K562 (cell line): ENCODE measurements at regions of chr22 and their contacts with region 1.

Region 1: DNA sequence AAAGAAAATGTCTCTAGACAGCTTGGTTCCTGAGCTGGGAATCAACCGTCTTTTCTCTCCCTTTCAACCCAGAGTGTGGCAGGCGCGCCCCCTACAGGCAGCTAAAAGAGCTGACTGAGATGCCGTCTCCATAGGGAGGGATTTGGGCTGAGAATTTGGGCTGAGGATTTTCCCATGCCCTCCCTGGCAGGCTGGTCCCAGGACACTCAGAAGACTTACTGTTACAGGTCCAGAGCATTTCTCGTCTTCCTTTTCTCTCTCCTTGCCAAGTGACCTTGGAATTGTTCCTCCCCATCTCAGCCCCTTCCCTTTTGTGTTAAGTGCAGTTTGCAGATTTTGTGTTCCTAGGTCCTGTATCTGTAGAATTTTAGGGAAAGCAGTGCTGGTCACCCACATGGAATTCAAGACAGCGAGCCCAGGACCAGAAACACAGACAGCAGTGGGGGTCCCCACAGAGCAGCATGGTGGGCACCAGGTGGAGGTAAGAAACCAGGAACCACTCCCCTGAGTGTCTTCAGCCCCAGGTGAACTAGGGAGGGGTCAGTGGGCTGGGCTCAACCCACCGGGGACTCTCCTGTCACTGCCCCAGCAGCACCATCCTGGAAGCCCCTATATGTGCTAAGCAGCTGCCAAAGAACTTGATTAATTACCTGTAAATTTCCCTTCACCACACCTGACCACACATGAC is 9.9 kb upstream of the IGLL5 start:
- DNase-seq: peak in 3 of 4 experiments; percentile 58 to 99 (median 98)
- ATAC-seq: peak; percentile 90
- H3K4me3 ChIP-seq: no peak overlapping the region
- H3K27ac ChIP-seq: no peak overlapping the region
- H3K4me1 ChIP-seq: peaks cover 0 to 3% of the 10 kb centered on the region in 2 experiments; a peak in 1 of 5 replicates
- H3K27me3 ChIP-seq: peaks cover 0 to 41% of the 10 kb centered on the region in 2 experiments; a peak in 2 of 5 replicates
- CTCF ChIP-seq: no peak
- EP300 ChIP-seq: no peak
- POLR2A ChIP-seq: no peak
- RAD21 ChIP-seq: no peak

Region 2: GRCh38 chr22:22753526-22754267 is 124.0 kb before region 1 on chr22:
- CTCF ChIA-PET with region 1: interaction called, 23 read pairs
- POLR2A ChIA-PET with region 1: interaction called, 16 read pairs
- in situ Hi-C with region 1: no loop called
- intact Hi-C with region 1: loop called (anchors 1 kb)
- DNase-seq: peak; percentile 96 to 100 (median 100)
- ATAC-seq: peak; percentile 97
- H3K4me3 ChIP-seq: no peak overlapping the region
- H3K27ac ChIP-seq: no peak overlapping the region
- H3K4me1 ChIP-seq: no peaks in the 10 kb centered on the region
- H3K27me3 ChIP-seq: peaks cover 2 to 20% of the 10 kb centered on the region in 2 experiments; a peak in 3 of 5 replicates
- CTCF ChIP-seq: peak in 1 of 3 experiments; percentile 100; a peak in 2 of 6 replicates
- EP300 ChIP-seq: no peak; the same call in 1 of the 2 replicates
- POLR2A ChIP-seq: no peak
- RAD21 ChIP-seq: peak in 1 of 2 experiments; percentile 98; a peak in 2 of 4 replicates

Region 3: DNA sequence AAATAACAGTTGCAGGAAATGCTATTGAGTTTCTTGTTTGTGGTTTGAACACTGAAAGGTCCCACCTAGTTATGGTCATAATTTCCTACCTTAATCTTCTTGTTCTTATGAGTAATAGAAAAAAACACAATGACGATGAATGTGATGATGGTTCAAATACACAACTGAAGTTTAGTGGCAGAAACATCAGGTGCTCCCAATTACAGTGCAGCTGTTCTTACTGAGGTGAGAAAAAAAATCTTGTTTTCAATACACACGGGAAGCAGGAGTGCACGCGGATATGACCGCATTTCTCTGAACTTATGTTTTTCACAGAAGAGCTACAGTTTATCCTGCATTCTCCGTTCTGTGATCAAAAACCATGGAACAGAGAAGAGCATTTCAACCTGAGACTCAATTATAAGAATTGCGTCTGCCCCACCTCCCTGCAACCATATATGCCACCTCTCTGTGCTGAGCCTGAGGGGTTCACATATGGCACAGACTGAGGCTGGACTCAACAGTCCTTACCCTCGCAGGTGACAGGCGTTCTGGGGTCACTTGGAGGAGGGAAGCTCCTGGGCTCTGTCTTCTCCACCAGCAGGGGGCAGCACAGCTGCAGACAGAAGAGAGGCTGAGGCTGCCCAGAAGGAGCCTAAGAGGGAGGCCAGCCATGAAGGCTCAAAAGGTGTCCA is 89.7 kb before region 1 on chr22:
- CTCF ChIA-PET with region 1: interaction called, 69 read pairs
- POLR2A ChIA-PET with region 1: interaction called, 5 read pairs
- in situ Hi-C with region 1: no loop called
- intact Hi-C with region 1: loop called (anchors 1 kb)
- DNase-seq: peak; percentile 97 to 100 (median 99)
- ATAC-seq: peak; percentile 96
- H3K4me3 ChIP-seq: no peak overlapping the region
- H3K27ac ChIP-seq: no peak overlapping the region
- H3K4me1 ChIP-seq: peaks cover 0 to 3% of the 10 kb centered on the region in 2 experiments; a peak in 1 of 5 replicates
- H3K27me3 ChIP-seq: peaks cover 26 to 30% of the 10 kb centered on the region in 2 experiments; a peak in 4 of 5 replicates
- CTCF ChIP-seq: no peak
- EP300 ChIP-seq: no peak
- POLR2A ChIP-seq: no peak
- RAD21 ChIP-seq: no peak

Region 4: DNA sequence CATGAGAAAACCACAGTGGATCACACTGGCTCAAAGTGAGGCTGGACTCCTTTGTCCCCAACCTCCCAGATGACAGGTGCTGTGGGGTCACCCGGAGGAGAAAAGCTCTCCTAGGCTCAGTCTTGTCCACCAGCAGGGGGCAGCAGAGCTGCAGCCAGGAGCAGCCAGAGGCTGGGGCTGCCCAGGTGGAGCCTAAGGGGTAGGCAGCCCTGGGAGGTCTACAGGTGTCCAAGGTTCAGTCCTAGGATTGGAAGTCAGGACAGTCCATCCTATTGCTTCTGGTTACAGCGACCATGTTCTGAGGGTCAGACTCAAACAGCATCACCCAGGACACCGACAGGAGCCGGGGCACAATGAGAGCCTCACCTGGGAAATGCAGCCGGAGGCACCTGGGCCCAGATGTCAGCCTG is 67.6 kb before region 1 on chr22:
- CTCF ChIA-PET with region 1: interaction called, 251 read pairs
- POLR2A ChIA-PET with region 1: interaction called, 9 read pairs
- in situ Hi-C with region 1: loop called (anchors 5 kb)
- intact Hi-C with region 1: loop called (anchors 1 kb)
- DNase-seq: peak; percentile 97 to 100 (median 98)
- ATAC-seq: peak; percentile 96
- H3K4me3 ChIP-seq: no peak overlapping the region
- H3K27ac ChIP-seq: no peak overlapping the region
- H3K4me1 ChIP-seq: peaks cover 0 to 4% of the 10 kb centered on the region in 2 experiments; a peak in 1 of 5 replicates
- H3K27me3 ChIP-seq: peaks cover 8 to 19% of the 10 kb centered on the region in 2 experiments; a peak in 3 of 5 replicates
- CTCF ChIP-seq: no peak
- EP300 ChIP-seq: no peak
- POLR2A ChIP-seq: no peak
- RAD21 ChIP-seq: no peak

Region 5: DNA sequence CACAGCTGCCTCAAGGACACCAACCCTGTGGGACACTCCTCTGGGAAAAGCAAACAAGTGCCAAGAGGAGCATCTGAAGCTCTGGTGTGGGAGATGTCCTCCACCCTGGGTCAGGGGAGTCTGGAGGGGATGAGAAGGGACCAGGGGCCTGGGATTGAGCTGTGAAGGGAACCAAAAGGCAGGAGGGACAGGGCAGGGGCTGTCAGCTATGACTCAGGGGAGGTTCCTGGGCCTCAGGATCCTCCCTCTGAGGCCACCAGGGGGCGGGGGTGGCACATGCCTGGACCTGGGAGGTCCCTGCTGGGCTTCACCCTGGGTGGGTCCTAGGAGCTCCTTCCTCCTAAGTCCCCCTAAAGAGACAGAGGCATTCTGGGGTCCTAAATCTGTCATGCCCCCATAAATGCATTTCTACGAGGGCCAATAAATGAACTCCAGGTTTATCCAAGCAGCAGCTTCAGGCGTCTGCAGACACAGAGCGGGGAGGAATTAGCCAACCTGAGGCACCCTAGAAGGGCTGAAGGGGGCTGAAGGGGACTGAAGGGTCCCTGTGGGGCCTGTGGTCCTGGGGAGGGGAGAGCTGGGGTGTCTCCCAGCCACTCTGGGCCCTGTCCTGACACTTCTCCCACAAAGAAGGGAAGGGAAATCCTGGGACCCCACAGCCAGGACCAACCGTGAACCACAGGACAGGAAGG is 21.9 kb before region 1 on chr22:
- CTCF ChIA-PET with region 1: interaction called, 42 read pairs
- POLR2A ChIA-PET with region 1: interaction called, 17 read pairs
- in situ Hi-C with region 1: no loop called
- intact Hi-C with region 1: no loop called
- DNase-seq: peak; percentile 93 to 100 (median 98)
- ATAC-seq: peak; percentile 98
- H3K4me3 ChIP-seq: no peak overlapping the region
- H3K27ac ChIP-seq: no peak overlapping the region
- H3K4me1 ChIP-seq: no peaks in the 10 kb centered on the region
- H3K27me3 ChIP-seq: peaks cover 22 to 38% of the 10 kb centered on the region in 2 experiments
- CTCF ChIP-seq: no peak
- EP300 ChIP-seq: no peak
- POLR2A ChIP-seq: no peak
- RAD21 ChIP-seq: no peak

Region 6: DNA sequence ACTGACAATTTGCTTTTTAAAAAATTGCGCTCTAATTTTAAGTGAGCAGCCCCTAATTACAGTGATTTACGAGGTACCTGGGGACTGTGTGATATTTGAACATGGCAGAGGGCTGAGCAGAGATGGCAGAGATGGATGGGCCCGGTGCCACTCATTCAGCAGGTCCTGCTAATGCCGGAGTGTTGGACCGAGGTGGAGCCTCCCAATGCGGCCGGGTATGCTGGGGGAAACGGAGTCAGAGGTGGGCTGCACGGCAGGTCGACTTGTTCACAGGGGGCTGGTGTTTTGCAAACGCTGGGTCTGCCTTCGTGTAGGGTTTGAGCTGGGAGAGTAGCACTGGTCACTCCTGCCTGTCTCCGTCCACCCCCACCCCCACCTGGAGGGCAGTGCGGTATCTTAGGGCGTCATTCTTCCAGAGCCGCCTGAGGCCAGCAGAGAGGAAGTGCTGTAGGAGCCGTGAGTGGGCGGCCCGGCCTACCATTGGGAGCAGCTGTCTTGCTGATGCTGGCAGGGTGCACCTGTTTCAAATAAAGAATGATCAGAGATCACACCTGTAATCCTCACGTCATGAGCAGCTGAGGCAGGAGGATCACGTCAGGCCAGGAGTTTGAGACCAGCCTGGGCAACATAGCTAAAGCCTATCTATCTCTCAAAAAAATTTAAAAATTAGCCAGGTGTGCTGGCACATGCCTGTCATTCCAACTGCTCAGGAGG is 579.8 kb after region 1 on chr22:
- CTCF ChIA-PET with region 1: no interaction called
- POLR2A ChIA-PET with region 1: no interaction called
- in situ Hi-C with region 1: no loop called
- intact Hi-C with region 1: no loop called
- DNase-seq: peak; percentile 11 to 29 (median 20)
- ATAC-seq: peak; percentile 77
- H3K4me3 ChIP-seq: no peak overlapping the region
- H3K27ac ChIP-seq: no peak overlapping the region
- H3K4me1 ChIP-seq: peaks cover 0 to 19% of the 10 kb centered on the region in 2 experiments; a peak in 3 of 5 replicates
- H3K27me3 ChIP-seq: no peaks in the 10 kb centered on the region; a peak in 1 of 5 replicates
- CTCF ChIP-seq: no peak
- EP300 ChIP-seq: no peak
- POLR2A ChIP-seq: no peak
- RAD21 ChIP-seq: no peak